Right ventricle myocardium inferior (tissue), 1 donor: ENCODE measurements at regions of chr4 and their contacts with region 1.

Region 1: GRCh38 chr4:123770884-123771283 is 374.3 kb downstream of the SPRY1 start:
- DNase-seq: no peak
- ATAC-seq: no peak

Region 2: GRCh38 chr4:124262211-124263179 is 491.6 kb after region 1 on chr4:
- intact Hi-C with region 1: loop called (anchors 5 kb)
- DNase-seq: no peak
- ATAC-seq: peak; percentile 89